Activated CD8-positive, alpha-beta T cell treated with anti-CD3 and anti-CD28 coated beads, Interleukin-2, amount 10 ng/mL, durations not matched to agents 7 days and 5 days (primary cell): ENCODE measurements at regions of chr11 and their contacts with region 1.

Region 1: DNA sequence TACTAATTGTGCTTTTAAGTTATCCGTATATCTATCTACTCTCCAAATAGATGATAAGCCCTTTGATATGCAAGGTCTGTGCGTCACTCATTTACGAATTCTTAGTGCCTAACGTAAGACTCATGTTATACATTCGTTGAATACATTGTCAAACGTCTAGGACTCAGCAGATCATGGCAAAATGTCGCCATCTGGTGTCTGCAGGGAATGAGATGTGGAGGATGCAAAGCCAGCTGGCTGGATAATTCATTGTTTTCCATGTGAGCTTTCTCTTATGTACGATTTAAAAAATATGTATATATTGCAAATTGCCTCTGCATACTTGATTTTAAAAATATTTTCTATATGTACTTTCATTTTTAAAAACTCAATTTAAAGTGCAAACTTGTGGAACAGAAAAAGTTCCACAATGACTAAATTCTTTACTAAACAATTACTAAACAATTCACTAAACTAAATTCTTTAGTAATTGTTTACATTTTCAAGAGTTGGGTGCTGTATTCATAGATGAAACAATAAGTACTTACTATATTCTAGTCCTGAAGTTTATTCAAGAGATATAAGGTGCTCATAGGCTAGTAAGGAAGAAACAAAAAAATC is 33.8 kb downstream of the ZNF202 start:
- DNase-seq: peak; percentile 70
- ATAC-seq: peak; percentile 65
- H3K4me3 Mint-ChIP-seq: no peak overlapping the region
- H3K27ac Mint-ChIP-seq: no peak overlapping the region
- H3K4me1 Mint-ChIP-seq: no peaks in the 10 kb centered on the region
- H3K27me3 Mint-ChIP-seq: peaks cover 6% of the 10 kb centered on the region

Region 2: GRCh38 chr11:123640677-123641494 is 66.8 kb before region 1 on chr11:
- CTCF ChIA-PET with region 1: interaction called, 42 read pairs
- POLR2A ChIA-PET with region 1: interaction called, 3 read pairs
- DNase-seq: peak; percentile 65
- ATAC-seq: peak; percentile 87
- H3K4me3 Mint-ChIP-seq: no peak overlapping the region
- H3K27ac Mint-ChIP-seq: no peak overlapping the region
- H3K4me1 Mint-ChIP-seq: peaks cover 2% of the 10 kb centered on the region
- H3K27me3 Mint-ChIP-seq: peaks cover 4% of the 10 kb centered on the region

Region 3: DNA sequence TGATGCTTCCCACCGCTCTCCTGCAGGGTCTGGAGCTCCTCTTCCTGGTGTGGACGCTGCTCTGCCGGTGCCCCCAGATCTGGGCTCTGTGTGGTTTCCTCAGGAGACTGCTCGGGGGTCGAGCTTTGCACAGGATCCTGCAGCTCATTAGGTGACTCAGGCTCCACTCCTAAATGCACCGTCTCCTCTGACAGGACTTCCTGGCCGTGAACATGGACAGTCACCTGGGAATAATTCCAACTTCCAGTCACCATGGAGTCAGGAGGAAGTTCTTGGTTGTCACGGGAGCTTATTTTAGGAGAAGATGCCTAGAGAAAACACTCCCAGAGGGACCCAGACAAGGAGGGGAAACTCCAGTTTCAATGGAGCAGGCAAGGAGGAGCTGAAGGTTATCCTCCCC is 21.9 kb after region 1 on chr11:
- CTCF ChIA-PET with region 1: interaction called, 11 read pairs
- POLR2A ChIA-PET with region 1: no interaction called
- DNase-seq: no peak
- ATAC-seq: no peak
- H3K4me3 Mint-ChIP-seq: no peak overlapping the region
- H3K27ac Mint-ChIP-seq: no peak overlapping the region
- H3K4me1 Mint-ChIP-seq: no peaks in the 10 kb centered on the region
- H3K27me3 Mint-ChIP-seq: no peaks in the 10 kb centered on the region